Right ventricle myocardium inferior (tissue), 1 donor: ENCODE measurements at regions of chr1 and their contacts with region 1.

Region 1: GRCh38 chr1:47023302-47024140 is at the start of gene CYP4X1:
- DNase-seq: peak; percentile 73
- ATAC-seq: peak; percentile 81
- total RNA-seq, gene CYP4X1: 1.5 TPM

Region 2: DNA sequence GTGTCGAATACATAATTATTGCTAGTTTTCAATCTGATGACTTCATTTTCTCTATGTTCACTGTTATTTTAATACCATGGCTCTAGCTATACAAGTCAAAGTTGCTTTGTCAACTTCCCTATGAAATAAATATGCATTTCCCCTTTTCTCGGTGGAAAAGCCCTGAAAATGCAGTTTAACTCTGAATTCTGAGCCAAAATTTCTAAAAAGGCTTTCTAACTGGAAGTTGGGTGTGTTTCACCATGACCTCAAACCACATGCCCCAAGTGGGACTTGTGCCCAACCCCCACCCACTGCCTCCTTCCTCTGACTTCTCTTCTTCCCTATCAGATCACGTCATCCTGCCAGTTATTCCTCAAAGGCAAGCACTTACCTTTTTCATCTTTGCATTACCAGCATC is 428.4 kb before region 1 on chr1:
- intact Hi-C with region 1: no loop called
- DNase-seq: peak; percentile 88
- ATAC-seq: peak; percentile 75

Region 3: DNA sequence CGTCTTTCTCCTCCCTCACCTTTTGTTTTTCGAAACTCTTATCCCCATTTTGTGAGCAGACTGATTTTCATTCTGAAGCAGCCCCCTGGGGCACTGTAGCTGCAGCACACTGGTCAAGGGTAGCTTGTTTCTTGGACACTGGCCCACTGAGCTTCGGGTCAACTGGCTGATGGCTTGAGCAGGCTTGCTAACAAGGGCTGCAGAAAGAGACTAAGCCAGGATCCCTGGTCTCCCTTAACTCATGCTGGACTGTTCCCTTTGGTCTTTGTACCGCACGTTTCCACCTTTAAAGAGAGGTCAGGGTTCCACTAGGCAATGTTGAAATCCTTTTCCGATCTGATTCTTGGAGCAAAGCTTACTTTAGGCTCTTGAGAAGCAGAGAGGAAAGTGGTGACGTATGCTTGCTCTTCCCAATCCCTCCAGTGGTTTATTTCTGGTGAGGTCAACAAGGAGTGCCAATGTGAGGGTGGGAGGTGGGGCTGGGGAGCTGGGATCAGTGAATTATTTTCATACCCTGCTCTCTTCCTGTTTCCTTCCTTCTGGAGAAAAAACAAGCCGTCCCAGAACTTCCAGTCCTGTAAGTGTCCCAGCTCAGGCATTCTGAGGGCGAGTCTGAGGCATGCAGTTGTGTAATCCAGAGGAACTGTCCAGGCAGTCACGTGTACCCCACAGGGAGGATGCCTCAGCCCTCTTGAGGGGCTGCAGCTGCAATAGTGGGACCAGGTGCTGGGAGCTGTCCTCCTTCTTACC is 217.1 kb before region 1 on chr1:
- intact Hi-C with region 1: loop called (anchors 5 kb)
- DNase-seq: peak; percentile 80
- ATAC-seq: peak; percentile 91

Region 4: DNA sequence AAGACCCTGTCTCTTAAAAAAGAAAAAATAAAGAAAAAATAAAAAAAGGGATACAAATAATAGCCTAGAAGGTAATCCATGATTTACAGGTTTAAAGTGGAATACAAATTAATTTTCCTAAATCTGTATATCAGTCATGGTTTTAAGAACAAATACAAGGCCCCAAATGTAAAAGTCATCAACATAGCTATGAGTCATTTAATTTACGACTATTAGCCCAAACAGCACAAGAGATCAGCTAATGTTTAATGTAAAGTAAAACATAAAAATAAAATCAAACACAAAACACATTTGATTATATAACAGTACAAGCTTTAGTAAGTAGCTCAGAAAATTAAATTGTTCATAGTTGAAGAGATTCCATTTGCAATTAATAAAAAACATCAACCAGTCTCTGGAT is 228.8 kb after region 1 on chr1:
- intact Hi-C with region 1: no loop called
- DNase-seq: no peak
- ATAC-seq: no peak